ENCODE measurements at regions of chr11 and their contacts with region 1.

Region 1: GRCh38 chr11:75547580-75548058 is 14.4 kb upstream of the SERPINH1 start:
- DNase-seq: peak; percentile 59 to 66
- ATAC-seq: peak; percentile 79 to 90 (median 88)
- H3K4me3 ChIP-seq: no peak overlapping the region
- H3K27ac ChIP-seq: peak overlapping the region in 1 of 10 donors; percentile 47
- H3K4me1 ChIP-seq: peaks cover 0 to 7% (median 5%) of the 10 kb centered on the region in 9 donors
- H3K27me3 ChIP-seq: no peaks in the 10 kb centered on the region
- CTCF ChIP-seq: peak; percentile 85 to 97 (median 90)

Region 2: DNA sequence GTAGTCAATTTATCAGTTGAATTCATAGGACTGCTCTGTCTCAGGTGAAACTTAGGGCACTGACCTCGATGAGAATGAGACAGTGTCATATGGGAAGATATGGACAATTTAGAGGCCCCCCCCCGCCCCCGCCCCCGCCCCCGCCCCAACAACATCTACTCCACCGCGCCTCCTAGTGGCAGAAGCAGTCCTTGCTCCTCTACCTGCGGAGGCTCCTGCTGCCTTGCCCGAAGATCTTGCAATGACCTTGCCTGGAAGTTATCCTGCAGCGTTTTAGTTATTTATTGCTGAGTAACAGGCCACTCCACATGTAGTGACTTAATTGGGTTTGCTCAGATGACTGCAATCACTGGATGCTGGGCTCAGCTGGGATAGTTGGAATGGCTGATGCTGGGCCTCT is 29.6 kb after region 1 on chr11:
- intact Hi-C with region 1: loop called in 7 of 10 experiments (anchors 1 to 5 kb)
- DNase-seq: peak; percentile 63 to 74
- ATAC-seq: no peak
- H3K4me3 ChIP-seq: no peak overlapping the region
- H3K27ac ChIP-seq: peak overlapping the region in 2 of 10 donors; percentile 53 to 56
- H3K4me1 ChIP-seq: peaks cover 0 to 32% (median 20%) of the 10 kb centered on the region in 9 donors
- H3K27me3 ChIP-seq: no peaks in the 10 kb centered on the region
- CTCF ChIP-seq: peak; percentile 33 to 75 (median 64)

Region 3: DNA sequence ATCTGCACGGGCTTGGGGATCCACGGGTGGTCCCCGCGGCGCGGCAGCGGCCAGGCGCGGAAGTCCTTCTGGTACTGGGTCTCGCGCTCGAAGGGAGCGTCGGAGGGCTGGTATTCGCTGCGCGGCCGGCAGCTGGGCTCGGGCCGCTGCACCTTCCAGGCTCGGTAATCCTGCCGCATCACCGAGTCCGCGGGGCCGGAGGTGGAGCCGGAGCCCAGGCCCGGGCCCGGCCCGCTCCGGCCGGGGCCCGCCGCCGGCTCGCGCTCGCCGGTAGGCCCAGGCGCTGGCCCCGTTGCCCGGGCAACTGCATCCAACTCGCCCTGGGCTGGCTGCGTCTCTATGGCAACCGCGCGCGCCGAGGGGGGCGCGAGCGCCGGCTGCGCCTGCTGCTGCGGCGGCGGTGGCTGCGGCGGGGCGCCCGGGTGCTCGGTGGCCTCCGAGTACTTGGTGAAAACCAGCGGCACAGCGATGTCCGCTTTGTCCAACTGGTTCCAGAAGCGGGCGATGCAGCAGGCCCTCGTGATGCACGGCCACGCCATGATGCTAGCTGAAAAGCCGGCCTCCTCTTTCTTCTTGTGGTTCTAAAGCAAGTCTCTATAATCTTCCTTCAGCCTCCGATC is 120.3 kb after region 1 on chr11:
- intact Hi-C with region 1: loop called in 3 of 10 experiments (anchors 5 to 10 kb)
- DNase-seq: peak; percentile 51 to 59
- ATAC-seq: peak; percentile 23 to 78 (median 52)
- H3K4me3 ChIP-seq: peak overlapping the region; percentile 32 to 85 (median 63)
- H3K27ac ChIP-seq: peak overlapping the region in 8 of 10 donors; percentile 31 to 64 (median 54)
- H3K4me1 ChIP-seq: peaks cover 9 to 19% (median 14%) of the 10 kb centered on the region in 9 donors
- H3K27me3 ChIP-seq: peaks cover 0 to 91% (median 8%) of the 10 kb centered on the region in 7 donors
- CTCF ChIP-seq: no peak

Region 4: GRCh38 chr11:75706260-75706729 is 158.7 kb after region 1 on chr11:
- intact Hi-C with region 1: loop called in 5 of 10 experiments (anchors 2 to 10 kb)
- DNase-seq: peak; percentile 66 to 80
- ATAC-seq: peak; percentile 82 to 97 (median 94)
- H3K4me3 ChIP-seq: peak overlapping the region in 1 of 10 donors; percentile 14
- H3K27ac ChIP-seq: no peak overlapping the region
- H3K4me1 ChIP-seq: peaks cover 0 to 8% (median 4%) of the 10 kb centered on the region in 9 donors
- H3K27me3 ChIP-seq: no peaks in the 10 kb centered on the region
- CTCF ChIP-seq: peak in 8 of 9 donors; percentile 93 to 98 (median 95)

Region 5: DNA sequence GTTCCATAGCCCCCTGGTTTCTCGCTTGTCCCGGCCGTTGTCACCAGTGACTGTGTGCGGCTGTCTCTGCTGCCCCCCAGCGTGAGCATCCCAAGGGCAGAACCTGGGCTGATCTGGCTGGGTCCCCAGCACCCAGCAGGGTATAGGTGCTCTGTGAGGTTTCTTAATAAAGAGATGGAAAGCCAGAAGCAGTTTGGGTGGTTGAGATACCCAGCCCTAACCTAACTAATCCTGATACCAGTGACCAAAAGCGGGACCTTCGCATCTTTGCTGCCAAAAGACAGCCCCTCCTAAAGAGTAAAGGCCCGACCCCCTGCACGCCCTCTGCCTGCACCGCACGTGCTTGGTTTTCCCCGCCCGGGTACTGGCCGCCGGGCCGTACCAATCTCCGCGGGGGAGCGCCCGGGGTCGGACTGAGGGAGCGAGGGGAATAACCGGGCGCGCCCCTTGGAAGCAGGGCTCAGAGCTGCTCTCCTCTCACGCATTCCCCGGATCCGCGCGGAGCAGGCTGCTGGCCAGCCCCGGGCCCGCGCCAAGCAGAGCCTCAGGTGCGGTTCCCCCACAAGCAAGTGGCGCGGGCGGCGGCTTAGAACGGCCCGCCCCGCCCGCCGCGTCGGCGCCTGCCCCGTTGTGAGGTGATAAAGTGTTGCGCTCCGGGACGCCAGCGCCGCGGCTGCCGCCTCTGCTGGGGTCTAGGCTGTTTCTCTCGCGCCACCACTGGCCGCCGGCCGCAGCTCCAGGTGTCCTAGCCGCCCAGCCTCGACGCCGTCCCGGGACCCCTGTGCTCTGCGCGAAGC is 220.7 kb after region 1 on chr11 and contains the start of gene DGAT2:
- intact Hi-C with region 1: loop called in 2 of 10 experiments (anchors 10 kb)
- DNase-seq: peak; percentile 70 to 79
- ATAC-seq: peak; percentile 88 to 93 (median 92)
- H3K4me3 ChIP-seq: peak within 1 kb of the TSS; percentile 33 to 68 (median 55)
- H3K27ac ChIP-seq: peak within 1 kb of the TSS in 8 of 10 donors; percentile 23 to 87 (median 58)
- H3K4me1 ChIP-seq: peaks cover 7 to 52% (median 16%) of the 10 kb centered on the region in 9 donors
- H3K27me3 ChIP-seq: peaks cover 0 to 30% (median 22%) of the 10 kb centered on the region in 7 donors
- CTCF ChIP-seq: peak in 8 of 9 donors; percentile 11 to 50 (median 32)
- total RNA-seq, gene DGAT2: 6.2 to 24.4 (median 10.3) TPM

Region 6: GRCh38 chr11:76329084-76329984 is 781.7 kb after region 1 on chr11:
- intact Hi-C with region 1: loop called in 1 of 10 experiments (anchors 10 kb)
- DNase-seq: no peak
- ATAC-seq: no peak
- H3K4me3 ChIP-seq: no peak overlapping the region
- H3K27ac ChIP-seq: no peak overlapping the region
- H3K4me1 ChIP-seq: peaks cover 0 to 11% (median 7%) of the 10 kb centered on the region in 9 donors
- H3K27me3 ChIP-seq: no peaks in the 10 kb centered on the region
- CTCF ChIP-seq: no peak